Mucosa of descending colon (tissue), 3 donors: ENCODE measurements at regions of chr18 and their contacts with region 1.

Region 1: DNA sequence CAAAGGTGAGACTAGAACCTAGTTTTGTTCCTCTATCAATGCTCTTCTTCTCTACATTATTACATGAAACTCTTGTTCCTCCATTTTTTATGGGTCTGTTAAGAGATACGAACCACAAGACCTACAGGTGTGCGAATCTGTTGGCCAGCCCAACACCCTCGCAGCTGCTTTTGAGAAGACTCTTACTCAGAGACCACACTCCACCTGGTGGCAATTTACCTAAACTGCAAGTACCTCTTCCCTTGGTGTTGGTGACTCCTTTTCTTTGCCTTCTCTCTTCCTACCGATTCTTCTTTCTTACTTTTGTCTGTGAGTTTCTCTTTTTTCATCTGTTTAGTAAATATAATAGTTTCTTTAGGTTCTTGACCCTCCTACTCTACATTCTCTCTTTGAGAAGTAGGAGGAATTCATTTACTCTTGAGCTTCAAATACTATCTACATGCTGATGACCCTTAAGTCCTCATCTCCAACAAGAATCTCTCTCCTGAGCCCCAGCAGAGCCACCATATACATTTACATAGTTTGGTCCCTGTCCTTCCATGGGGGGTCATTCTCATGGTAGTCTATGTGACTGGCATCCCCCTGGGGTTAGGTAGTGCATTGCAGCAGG is 81.8 kb upstream of the GAREM1 start:
- DNase-seq: peak in 2 of 3 donors; percentile 33 to 90
- ATAC-seq: peak; percentile 93
- H3K4me3 ChIP-seq: no peak overlapping the region
- H3K4me1 ChIP-seq: no peaks in the 10 kb centered on the region
- CTCF ChIP-seq: peak; percentile 71

Region 2: GRCh38 chr18:32158108-32158624 is 394.4 kb before region 1 on chr18:
- intact Hi-C with region 1: loop called (anchors 5 kb)
- DNase-seq: peak; percentile 78 to 89 (median 84)
- ATAC-seq: peak; percentile 90
- H3K4me3 ChIP-seq: no peak overlapping the region
- H3K4me1 ChIP-seq: peaks cover 16% of the 10 kb centered on the region
- CTCF ChIP-seq: peak; percentile 66

Region 3: GRCh38 chr18:32507093-32507492 is 45.4 kb before region 1 on chr18:
- intact Hi-C with region 1: no loop called
- DNase-seq: no peak
- ATAC-seq: no peak
- H3K4me3 ChIP-seq: no peak overlapping the region
- H3K4me1 ChIP-seq: no peaks in the 10 kb centered on the region
- CTCF ChIP-seq: no peak